ENCODE measurements at regions of chr1 and their contacts with region 1.

Region 1: GRCh38 chr1:78607334-78607927 is 12.8 kb upstream of the IFI44L start:
- DNase-seq: peak in 2 of 3 donors; percentile 37 to 51
- H3K4me3 ChIP-seq: no peak overlapping the region
- H3K27ac ChIP-seq: no peak overlapping the region
- H3K4me1 ChIP-seq: no peaks in the 10 kb centered on the region
- H3K27me3 ChIP-seq: no peaks in the 10 kb centered on the region

Region 2: DNA sequence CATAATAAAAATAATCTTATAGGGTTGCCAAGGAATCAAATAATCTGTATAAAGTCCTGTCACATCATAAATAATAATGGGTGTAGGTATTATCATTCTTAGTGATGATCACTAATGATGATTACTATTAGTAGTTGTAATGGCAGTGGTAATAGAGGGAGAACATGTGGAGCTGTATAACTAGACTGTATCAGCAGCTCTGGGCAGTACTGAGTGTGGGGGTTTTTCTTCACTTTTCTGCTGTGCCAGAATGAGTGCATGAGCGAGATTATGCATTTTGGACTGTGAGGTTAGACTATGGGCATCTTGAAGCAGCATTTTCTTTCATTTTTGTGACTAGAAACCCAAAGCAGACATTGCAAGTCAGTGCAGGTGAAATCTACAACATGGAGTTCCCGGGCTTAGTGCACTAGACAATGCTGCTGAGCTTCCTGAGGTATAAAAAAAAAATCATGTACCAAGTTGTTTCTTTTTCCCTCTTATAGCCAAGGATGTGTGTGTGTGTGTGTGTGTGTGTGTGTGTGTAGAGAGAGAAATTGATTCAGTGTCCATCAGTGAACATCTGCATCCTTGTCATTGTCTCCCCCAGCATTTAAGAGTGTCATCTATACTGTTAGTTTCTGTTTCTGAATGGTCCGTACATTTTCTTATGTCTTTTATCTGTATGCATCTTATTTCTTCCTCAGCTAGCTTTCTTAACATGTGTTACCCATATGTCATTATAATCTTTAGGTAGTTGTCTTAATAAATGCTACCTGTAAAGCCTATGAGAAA is 475.1 kb before region 1 on chr1:
- CTCF ChIA-PET with region 1: interaction called, 67 read pairs
- POLR2A ChIA-PET with region 1: no interaction called
- DNase-seq: no peak
- H3K4me3 ChIP-seq: no peak overlapping the region
- H3K27ac ChIP-seq: no peak overlapping the region
- H3K4me1 ChIP-seq: peaks cover 0 to 9% (median 1%) of the 10 kb centered on the region in 4 experiments
- H3K27me3 ChIP-seq: no peaks in the 10 kb centered on the region

Region 3: GRCh38 chr1:78676347-78676982 is 69.0 kb after region 1 on chr1:
- CTCF ChIA-PET with region 1: interaction called, 16 read pairs
- POLR2A ChIA-PET with region 1: no interaction called
- DNase-seq: peak; percentile 75 to 89 (median 81)
- H3K4me3 ChIP-seq: no peak overlapping the region
- H3K27ac ChIP-seq: no peak overlapping the region
- H3K4me1 ChIP-seq: peaks cover 0 to 4% (median 0%) of the 10 kb centered on the region in 4 experiments
- H3K27me3 ChIP-seq: no peaks in the 10 kb centered on the region